Mammary epithelial cell (primary cell): ENCODE measurements at regions of chr1 and their contacts with region 1.

Region 1: GRCh38 chr1:16073490-16074119 is at the start of gene FAM131C:
- DNase-seq: no peak
- H3K4me3 ChIP-seq: peak within 1 kb of the TSS; percentile 19 to 48 (median 48)
- H3K27ac ChIP-seq: no peak within 1 kb of the TSS
- H3K4me1 ChIP-seq: peaks cover 25% of the 10 kb centered on the region
- H3K27me3 ChIP-seq: no peaks in the 10 kb centered on the region
- CTCF ChIP-seq: peak; percentile 31 to 42
- total RNA-seq, gene FAM131C: 0.67 to 0.71 TPM

Region 2: DNA sequence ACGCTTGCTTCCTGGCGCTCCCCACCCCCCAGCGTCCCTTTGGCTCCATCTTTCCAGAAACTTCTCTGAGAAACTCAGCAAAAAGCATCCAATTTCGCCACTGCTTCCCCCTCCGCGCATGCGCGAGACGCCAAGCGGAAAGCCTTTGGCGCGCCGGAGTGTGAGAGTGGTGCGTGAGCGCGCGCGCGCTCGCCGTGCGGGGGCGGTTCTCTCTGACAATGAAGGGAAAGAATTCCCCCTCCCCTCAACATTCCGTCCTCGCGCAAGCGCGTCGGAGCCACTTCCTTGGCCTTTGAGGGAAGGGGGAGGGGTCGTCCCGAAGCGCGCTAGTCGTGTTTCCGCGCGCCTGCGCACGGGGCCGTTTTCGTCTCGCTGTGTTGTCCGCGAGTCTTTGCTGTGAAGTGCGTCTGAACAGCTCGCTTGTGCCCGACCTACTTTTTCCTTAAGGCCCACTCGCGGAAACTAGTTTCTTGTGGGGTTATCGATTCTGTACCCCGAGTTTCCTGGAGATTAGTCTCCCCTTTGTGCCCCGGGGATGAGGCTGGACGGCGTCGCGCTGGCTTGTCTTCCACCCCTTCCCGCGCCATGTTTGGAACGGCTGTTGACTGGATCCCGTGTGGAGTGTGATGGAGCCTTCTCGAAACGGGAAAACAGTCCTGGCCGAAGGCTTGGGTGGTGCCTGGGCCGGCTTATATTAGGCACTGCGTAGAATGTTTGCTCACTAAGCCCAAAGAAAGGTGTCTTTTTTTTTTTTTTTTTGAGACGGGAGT is 237.7 kb before region 1 on chr1:
- CTCF ChIA-PET with region 1: no interaction called
- dilution Hi-C with region 1: no loop called
- in situ Hi-C with region 1: no loop called
- intact Hi-C with region 1: no loop called
- DNase-seq: peak; percentile 99
- H3K4me3 ChIP-seq: peak overlapping the region; percentile 59 to 87 (median 65)
- H3K27ac ChIP-seq: peak overlapping the region; percentile 91
- H3K4me1 ChIP-seq: peaks cover 27% of the 10 kb centered on the region
- H3K27me3 ChIP-seq: no peaks in the 10 kb centered on the region
- CTCF ChIP-seq: no peak

Region 3: DNA sequence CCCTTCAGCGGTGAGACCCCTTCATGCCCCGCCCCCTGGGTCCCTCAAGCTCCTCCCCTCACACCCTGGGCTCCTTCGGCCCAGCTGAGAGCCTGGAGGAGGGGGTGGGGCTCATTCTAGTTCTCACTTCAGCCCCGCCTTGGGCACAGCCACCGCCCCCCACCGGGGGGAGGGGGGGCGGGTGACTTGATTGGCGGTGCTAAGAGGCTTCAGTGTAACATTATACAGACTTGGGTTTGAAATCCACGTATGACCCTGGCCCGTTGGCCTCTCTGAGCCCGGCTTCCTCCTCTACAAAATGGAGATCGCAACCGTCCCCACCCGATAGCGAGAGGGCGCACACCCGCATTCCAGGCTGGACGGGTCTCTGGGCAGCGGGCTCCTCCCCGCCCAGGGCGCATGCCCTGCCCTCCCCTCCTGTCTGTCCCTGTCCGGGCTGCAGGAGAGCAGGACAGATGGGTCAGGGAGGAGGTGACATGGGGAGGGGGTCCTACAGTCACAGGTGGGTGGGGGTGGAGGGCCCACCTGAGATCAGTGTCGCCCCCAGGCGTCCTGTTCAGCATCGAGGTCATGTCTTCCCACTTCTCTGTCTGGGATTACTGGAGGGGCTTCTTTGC is 24.9 kb before region 1 on chr1:
- CTCF ChIA-PET with region 1: interaction called, 12 read pairs
- dilution Hi-C with region 1: no loop called
- in situ Hi-C with region 1: no loop called
- intact Hi-C with region 1: no loop called
- DNase-seq: no peak
- H3K4me3 ChIP-seq: peak overlapping the region; percentile 13 to 45 (median 13)
- H3K27ac ChIP-seq: no peak overlapping the region
- H3K4me1 ChIP-seq: no peaks in the 10 kb centered on the region
- H3K27me3 ChIP-seq: no peaks in the 10 kb centered on the region
- CTCF ChIP-seq: no peak

Region 4: DNA sequence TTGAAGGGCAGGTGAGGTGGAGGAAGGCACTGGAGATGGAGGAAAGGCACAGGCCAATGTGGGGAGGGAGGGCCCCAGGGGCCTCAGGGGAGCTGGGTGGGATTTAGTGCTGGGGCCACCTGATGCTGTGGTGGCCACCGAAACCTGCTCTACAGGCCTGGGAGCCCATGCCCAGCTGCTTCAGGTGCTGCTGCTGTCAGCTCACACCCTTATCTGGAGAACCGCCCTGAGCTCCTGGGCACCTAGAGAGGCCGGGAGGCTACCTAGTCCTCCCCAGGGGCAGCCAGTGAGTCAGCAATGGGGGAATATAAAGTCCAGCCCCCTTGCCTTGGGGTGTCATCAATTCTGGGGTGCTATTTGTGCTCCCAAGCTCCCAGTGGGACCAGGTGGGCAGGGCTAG is 12.3 kb before region 1 on chr1:
- CTCF ChIA-PET with region 1: no interaction called
- dilution Hi-C with region 1: no loop called
- in situ Hi-C with region 1: no loop called
- intact Hi-C with region 1: no loop called
- DNase-seq: no peak
- H3K4me3 ChIP-seq: no peak overlapping the region
- H3K27ac ChIP-seq: no peak overlapping the region
- H3K4me1 ChIP-seq: no peaks in the 10 kb centered on the region
- H3K27me3 ChIP-seq: no peaks in the 10 kb centered on the region
- CTCF ChIP-seq: no peak

Region 5: GRCh38 chr1:16099412-16099811 is 25.8 kb after region 1 on chr1:
- CTCF ChIA-PET with region 1: no interaction called
- dilution Hi-C with region 1: no loop called
- in situ Hi-C with region 1: no loop called
- intact Hi-C with region 1: no loop called
- DNase-seq: no peak
- H3K4me3 ChIP-seq: no peak overlapping the region
- H3K27ac ChIP-seq: no peak overlapping the region
- H3K4me1 ChIP-seq: no peaks in the 10 kb centered on the region
- H3K27me3 ChIP-seq: no peaks in the 10 kb centered on the region
- CTCF ChIP-seq: no peak

Region 6: GRCh38 chr1:16351994-16352841 is 278.6 kb after region 1 on chr1 and contains the start of gene FBXO42:
- CTCF ChIA-PET with region 1: no interaction called
- dilution Hi-C with region 1: no loop called
- in situ Hi-C with region 1: loop called in 1 of 2 experiments (anchors 25 kb)
- intact Hi-C with region 1: loop called (anchors 2 kb)
- DNase-seq: peak; percentile 88
- H3K4me3 ChIP-seq: peak within 1 kb of the TSS; percentile 80 to 99 (median 83)
- H3K27ac ChIP-seq: peak within 1 kb of the TSS; percentile 74
- H3K4me1 ChIP-seq: peaks cover 16% of the 10 kb centered on the region
- H3K27me3 ChIP-seq: no peaks in the 10 kb centered on the region
- CTCF ChIP-seq: peak; percentile 9 to 32
- total RNA-seq, gene FBXO42: 19.8 to 21.4 TPM